MCF 10A (cell line): ENCODE measurements at regions of chr20 and their contacts with region 1.

Region 1: DNA sequence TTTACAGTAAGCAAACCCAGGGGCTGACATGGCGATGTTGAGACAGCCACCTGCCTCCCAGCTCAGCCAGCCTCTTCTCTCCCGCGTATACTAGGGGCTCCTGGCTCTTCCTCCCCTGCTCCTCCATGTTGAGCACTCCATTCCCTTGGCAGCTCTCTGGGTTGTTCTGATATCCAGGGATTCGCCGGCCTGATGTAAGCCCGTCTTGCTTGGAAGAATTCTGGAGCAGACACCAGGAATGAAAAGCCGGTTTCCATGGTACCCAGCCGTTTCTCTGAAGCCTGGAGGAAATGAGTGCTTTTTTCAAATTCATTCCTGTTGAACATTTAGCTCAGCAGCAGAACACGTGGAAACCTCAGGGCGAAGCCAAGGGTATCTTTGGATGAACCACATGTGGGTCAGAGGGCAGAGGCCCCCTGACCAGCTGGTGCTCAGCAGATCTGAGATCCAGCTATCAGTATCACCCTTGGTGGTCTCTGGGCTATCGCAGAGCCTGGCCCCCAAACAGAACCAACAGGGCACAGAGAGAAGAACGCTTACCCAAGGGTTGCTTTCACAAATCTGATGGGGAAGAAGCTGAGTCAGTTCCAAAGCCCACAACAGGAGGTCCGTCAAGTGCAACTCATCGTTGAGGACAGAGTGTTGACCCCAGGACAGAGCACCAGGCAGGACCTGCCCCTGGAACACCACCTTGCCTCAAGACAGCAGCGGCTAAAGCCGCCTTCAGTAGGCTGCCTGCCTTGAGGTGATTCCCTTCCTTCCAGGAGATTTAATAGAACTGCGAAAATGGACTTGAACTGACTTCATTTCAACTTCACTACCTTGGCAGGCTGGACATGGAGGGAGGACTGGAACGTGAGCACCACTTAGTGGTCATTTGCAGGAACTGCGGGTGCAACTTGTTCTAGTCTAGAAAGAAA is 96.1 kb upstream of the RIN2 start:
- DNase-seq: peak; percentile 73
- H3K4me3 Mint-ChIP-seq: no peak overlapping the region
- H3K27ac Mint-ChIP-seq: no peak overlapping the region
- H3K4me1 Mint-ChIP-seq: no peaks in the 10 kb centered on the region
- H3K27me3 Mint-ChIP-seq: peaks cover 59% of the 10 kb centered on the region
- CTCF ChIP-seq: peak; percentile 99

Region 2: GRCh38 chr20:18632196-18633009 is 1029.6 kb before region 1 on chr20:
- CTCF ChIA-PET with region 1: interaction called, 87 read pairs
- POLR2A ChIA-PET with region 1: no interaction called
- intact Hi-C with region 1: loop called (anchors 1 kb)
- DNase-seq: peak; percentile 63
- H3K4me3 Mint-ChIP-seq: no peak overlapping the region
- H3K27ac Mint-ChIP-seq: peak overlapping the region; percentile 64
- H3K4me1 Mint-ChIP-seq: no peaks in the 10 kb centered on the region
- H3K27me3 Mint-ChIP-seq: no peaks in the 10 kb centered on the region
- CTCF ChIP-seq: peak; percentile 93

Region 3: DNA sequence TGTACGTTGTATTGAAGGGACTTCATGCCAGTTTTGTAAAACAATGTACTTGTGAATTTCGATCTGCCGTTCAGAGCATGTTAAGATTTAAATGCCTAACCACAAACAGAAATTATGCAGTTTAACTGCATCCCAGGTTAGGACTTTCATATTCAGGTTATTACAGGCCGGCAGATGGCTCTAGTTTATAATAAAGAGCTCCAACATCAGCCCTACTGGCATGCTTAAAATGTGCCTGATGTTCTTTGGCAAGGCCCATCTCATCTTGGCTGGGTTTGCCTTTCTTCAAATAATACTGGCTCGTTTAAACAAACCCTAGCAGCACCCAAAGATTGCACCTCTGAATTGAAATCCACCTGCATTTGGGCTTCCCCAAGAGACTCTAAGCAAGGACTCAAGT is 73.2 kb before region 1 on chr20:
- CTCF ChIA-PET with region 1: interaction called, 11 read pairs
- POLR2A ChIA-PET with region 1: no interaction called
- intact Hi-C with region 1: no loop called
- DNase-seq: peak; percentile 4
- H3K4me3 Mint-ChIP-seq: no peak overlapping the region
- H3K27ac Mint-ChIP-seq: no peak overlapping the region
- H3K4me1 Mint-ChIP-seq: no peaks in the 10 kb centered on the region
- H3K27me3 Mint-ChIP-seq: peaks cover 11% of the 10 kb centered on the region
- CTCF ChIP-seq: no peak

Region 4: DNA sequence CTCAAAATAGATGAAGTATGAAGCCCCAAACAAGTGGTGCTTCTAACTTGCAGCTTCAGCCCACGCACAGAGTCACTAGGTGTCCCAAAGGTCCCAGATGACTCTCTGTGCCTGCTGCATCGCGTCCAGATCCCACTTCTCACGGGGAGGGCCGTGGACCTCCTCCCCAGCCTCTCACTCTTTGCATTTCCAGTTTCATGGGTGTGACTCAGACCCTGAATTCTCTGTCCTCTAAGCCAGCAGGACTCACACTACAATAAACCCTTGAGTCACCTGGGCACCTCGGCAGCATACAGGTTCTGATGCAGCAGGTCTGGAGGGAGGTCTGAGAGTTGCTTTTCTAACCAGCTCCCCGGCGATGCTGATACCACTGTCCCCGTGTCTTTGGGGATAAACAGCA is 17.9 kb before region 1 on chr20:
- CTCF ChIA-PET with region 1: interaction called, 21 read pairs
- POLR2A ChIA-PET with region 1: no interaction called
- intact Hi-C with region 1: no loop called
- DNase-seq: no peak
- H3K4me3 Mint-ChIP-seq: no peak overlapping the region
- H3K27ac Mint-ChIP-seq: no peak overlapping the region
- H3K4me1 Mint-ChIP-seq: no peaks in the 10 kb centered on the region
- H3K27me3 Mint-ChIP-seq: peaks cover 17% of the 10 kb centered on the region
- CTCF ChIP-seq: no peak

Region 5: DNA sequence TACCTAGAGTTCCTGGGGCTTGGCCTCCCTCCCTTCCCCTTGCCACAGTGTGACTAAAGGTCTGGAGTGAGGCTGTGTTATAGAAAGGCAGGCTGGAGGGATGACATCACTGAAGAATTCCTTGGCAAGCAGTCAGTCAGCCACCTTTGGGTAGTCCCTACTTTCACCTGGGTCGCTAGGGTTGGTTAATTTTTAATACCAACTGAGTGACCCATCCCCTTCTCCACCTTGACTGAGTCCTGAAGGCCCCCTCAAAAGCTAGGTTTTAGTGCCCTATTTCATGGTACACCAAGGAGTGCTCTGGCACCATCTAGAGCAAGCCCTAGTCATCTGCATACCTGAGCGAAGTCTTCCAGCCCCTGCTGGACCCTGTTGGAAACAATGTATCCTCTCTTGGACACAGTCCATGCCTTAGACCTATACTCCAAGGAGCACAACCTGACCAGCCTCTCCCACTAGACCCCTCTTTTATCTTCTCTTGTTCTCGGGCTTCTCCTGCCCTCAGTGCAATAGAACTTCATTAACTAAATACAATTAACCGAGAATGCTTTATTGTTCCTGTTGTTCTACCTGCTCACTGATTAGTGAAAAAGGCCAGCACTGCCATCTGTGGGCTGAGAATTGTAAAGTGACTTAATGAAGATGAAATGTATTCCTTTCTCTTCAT is 140.6 kb after region 1 on chr20:
- CTCF ChIA-PET with region 1: no interaction called
- POLR2A ChIA-PET with region 1: no interaction called
- intact Hi-C with region 1: no loop called
- DNase-seq: peak; percentile 72
- H3K4me3 Mint-ChIP-seq: no peak overlapping the region
- H3K27ac Mint-ChIP-seq: peak overlapping the region; percentile 9
- H3K4me1 Mint-ChIP-seq: peaks cover 18% of the 10 kb centered on the region
- H3K27me3 Mint-ChIP-seq: no peaks in the 10 kb centered on the region
- CTCF ChIP-seq: peak; percentile 21

Region 6: DNA sequence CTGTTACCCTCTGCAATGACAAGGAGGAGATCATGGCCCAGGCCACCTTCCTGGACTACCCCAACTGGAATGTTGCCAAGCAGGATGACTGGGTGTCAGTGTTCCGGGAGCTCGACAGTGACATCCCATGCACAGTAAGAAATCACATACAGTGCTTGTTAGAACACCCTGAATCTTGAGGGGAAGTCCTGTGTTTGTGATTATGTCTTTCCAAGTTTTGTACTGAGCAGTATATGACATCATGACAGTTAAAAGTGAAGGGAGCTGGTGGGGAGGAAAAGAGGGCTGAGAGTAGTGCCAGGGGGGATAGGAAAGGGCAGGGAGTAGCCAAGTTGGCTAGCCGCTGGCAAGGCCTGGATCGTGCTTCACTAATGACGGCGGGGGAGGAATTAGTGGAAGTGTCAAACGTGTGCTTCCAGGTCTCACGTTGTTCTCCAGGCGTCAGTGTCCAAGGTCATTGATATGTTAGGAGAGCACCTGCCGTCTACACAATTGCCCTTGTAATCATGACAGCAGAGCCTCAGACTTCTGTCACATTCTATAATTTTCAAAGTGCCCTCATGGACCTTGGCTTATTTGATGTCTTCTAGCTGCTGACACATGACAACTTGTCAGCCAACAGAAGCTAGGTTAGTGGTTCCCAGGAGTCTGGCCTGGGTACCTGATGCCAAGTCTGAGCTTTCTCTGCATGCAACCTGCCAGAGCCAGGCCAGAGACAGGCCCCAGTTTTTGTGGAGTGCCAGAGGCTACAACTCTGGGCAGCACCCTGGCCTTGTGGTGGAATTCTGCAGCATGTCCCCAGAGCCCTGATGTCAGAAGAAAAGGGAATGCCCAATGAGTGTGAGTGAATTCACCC is 409.1 kb after region 1 on chr20:
- CTCF ChIA-PET with region 1: no interaction called
- POLR2A ChIA-PET with region 1: no interaction called
- intact Hi-C with region 1: no loop called
- DNase-seq: no peak
- H3K4me3 Mint-ChIP-seq: no peak overlapping the region
- H3K27ac Mint-ChIP-seq: no peak overlapping the region
- H3K4me1 Mint-ChIP-seq: no peaks in the 10 kb centered on the region
- H3K27me3 Mint-ChIP-seq: no peaks in the 10 kb centered on the region
- CTCF ChIP-seq: no peak